ENCODE measurements at regions of chr9 and their contacts with region 1.

Region 1: GRCh38 chr9:71662057-71662456 is 106.3 kb downstream of the CEMIP2 start:
- DNase-seq: no peak
- H3K4me3 ChIP-seq: no peak overlapping the region
- H3K27ac ChIP-seq: no peak overlapping the region
- H3K4me1 ChIP-seq: peaks cover 0 to 22% (median 10%) of the 10 kb centered on the region in 4 experiments
- H3K27me3 ChIP-seq: no peaks in the 10 kb centered on the region
- CTCF ChIP-seq: no peak
- EP300 ChIP-seq: no peak
- POLR2A ChIP-seq: no peak
- RAD21 ChIP-seq: no peak

Region 2: DNA sequence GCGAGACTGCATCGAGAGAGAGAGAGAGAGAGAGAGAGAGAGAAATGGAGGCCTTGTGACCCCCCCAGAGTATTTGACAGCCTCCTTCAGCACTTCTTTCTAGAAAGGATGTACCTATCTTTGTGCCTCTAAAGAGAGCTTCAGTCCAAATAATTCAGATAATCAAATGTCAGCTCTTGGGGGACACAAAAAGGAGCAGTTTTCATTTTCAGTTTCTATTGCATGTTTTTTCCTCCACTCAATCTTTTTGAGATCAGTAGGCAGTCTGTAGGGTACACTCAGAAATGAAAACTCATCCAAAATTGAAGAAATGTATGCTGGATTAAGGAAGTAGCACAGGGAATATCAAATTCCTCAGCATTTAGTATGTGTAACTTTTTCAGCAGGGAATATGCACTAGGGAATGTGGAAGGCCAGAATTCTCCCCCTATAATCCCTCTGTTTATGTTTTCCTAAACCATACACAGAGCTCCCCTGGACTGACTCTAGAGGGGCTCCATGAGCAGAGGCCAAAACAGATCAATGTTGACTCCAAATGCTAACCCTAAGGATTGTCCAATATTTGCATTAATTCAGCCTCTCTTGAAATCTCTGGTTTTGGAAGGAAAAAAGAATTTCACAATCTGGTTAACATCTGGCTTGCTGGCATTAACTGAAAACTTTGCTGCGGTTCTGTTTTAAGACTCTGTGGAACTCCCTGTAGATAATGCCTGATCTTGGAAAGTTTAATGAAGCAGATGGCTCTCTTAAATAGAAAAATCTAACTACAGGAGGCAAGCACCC is 143.8 kb before region 1 on chr9:
- CTCF ChIA-PET with region 1: no interaction called
- POLR2A ChIA-PET with region 1: no interaction called
- DNase-seq: no peak
- H3K4me3 ChIP-seq: no peak overlapping the region
- H3K27ac ChIP-seq: no peak overlapping the region
- H3K4me1 ChIP-seq: peaks cover 3 to 15% (median 7%) of the 10 kb centered on the region in 4 experiments
- H3K27me3 ChIP-seq: no peaks in the 10 kb centered on the region
- CTCF ChIP-seq: no peak
- EP300 ChIP-seq: no peak
- POLR2A ChIP-seq: no peak
- RAD21 ChIP-seq: no peak

Region 3: GRCh38 chr9:71647094-71647591 is 14.9 kb before region 1 on chr9:
- CTCF ChIA-PET with region 1: interaction called, 16 read pairs
- POLR2A ChIA-PET with region 1: no interaction called
- DNase-seq: no peak
- H3K4me3 ChIP-seq: no peak overlapping the region
- H3K27ac ChIP-seq: no peak overlapping the region
- H3K4me1 ChIP-seq: peaks cover 0 to 5% (median 0%) of the 10 kb centered on the region in 4 experiments; a peak in 1 of 7 replicates
- H3K27me3 ChIP-seq: no peaks in the 10 kb centered on the region; a peak in 1 of 7 replicates
- CTCF ChIP-seq: no peak
- EP300 ChIP-seq: no peak
- POLR2A ChIP-seq: no peak
- RAD21 ChIP-seq: no peak

Region 4: DNA sequence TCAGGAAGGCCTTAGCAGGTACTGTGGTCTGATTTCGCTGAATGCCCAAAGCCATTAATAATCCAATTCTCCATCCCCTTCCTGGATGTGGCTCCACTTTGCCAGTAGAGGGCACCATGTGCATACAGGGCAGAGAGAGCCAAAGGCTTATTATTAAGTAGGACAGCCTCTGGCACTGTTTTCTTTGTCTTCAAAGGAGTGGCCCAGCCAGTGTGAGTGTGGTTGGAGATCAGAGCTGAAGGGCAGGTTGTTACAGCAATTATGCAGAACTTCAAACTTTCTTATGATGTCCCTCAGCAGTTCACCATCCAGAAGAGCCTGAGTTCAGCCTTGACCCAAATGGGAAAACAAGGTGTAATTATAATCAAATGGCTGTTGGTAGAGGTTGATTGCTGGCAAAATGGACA is 144.8 kb after region 1 on chr9:
- CTCF ChIA-PET with region 1: no interaction called
- POLR2A ChIA-PET with region 1: no interaction called
- DNase-seq: peak; percentile 27 to 55
- H3K4me3 ChIP-seq: no peak overlapping the region
- H3K27ac ChIP-seq: no peak overlapping the region
- H3K4me1 ChIP-seq: no peaks in the 10 kb centered on the region
- H3K27me3 ChIP-seq: no peaks in the 10 kb centered on the region
- CTCF ChIP-seq: peak; percentile 63 to 92 (median 90)
- EP300 ChIP-seq: no peak
- POLR2A ChIP-seq: no peak
- RAD21 ChIP-seq: peak; percentile 97 to 98